Mammary epithelial cell (primary cell): ENCODE measurements at regions of chr4 and their contacts with region 1.

Region 1: GRCh38 chr4:21790438-21791029 is 158.0 kb downstream of the KCNIP4 start:
- DNase-seq: peak; percentile 30
- H3K4me3 ChIP-seq: no peak overlapping the region
- H3K27ac ChIP-seq: no peak overlapping the region
- H3K4me1 ChIP-seq: peaks cover 5% of the 10 kb centered on the region
- H3K27me3 ChIP-seq: peaks cover 2% of the 10 kb centered on the region
- CTCF ChIP-seq: peak; percentile 11 to 45

Region 2: DNA sequence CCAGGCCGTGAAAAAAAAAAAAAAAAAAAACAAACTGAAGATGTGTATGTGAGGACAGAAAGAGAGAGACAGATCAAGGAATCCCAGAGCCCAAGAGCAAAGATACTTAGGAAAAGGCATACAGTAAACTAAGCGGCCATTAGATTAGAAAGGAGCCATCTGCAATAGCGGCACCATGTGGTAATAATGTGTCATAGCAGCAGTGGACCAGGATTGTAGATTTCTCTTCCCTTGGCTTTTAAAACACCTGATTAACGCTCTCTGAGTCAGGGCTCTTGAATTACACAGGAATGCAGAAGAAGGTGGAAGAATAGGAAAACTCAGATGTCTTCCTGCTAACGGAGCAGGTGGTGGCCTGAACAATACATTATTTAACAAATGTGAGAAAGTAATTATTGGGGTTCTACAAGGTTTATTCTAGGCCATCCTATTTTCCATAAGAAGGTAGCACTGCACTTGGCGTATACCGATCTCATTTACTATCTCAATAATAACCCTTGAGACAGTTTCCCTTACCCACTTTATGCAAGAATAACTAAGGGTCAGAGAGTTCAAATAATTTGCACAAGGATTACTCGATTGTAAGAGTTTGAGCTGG is 24.6 kb before region 1 on chr4:
- CTCF ChIA-PET with region 1: no interaction called
- dilution Hi-C with region 1: no loop called
- in situ Hi-C with region 1: no loop called
- intact Hi-C with region 1: no loop called
- DNase-seq: peak; percentile 73
- H3K4me3 ChIP-seq: no peak overlapping the region
- H3K27ac ChIP-seq: no peak overlapping the region
- H3K4me1 ChIP-seq: peaks cover 13% of the 10 kb centered on the region
- H3K27me3 ChIP-seq: no peaks in the 10 kb centered on the region
- CTCF ChIP-seq: peak; percentile 85 to 98

Region 3: DNA sequence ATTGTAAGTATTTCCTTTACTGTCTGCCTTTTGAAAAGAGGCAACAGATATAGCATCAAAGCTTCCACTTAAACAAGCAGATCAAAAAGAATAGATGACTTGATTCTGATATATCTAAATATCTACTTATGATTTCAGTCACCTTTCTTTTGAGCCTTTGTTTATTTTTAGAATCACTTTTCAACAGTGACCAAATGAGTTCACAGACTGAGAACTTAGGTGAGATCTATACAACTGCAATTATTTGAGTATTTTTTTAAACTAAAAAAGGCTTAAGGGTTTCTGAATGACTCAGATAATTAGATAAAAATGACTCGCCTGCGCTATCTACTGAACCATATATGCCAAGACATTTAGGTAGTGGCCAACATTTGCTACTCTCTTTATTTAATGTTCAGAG is 324.7 kb after region 1 on chr4:
- CTCF ChIA-PET with region 1: no interaction called
- dilution Hi-C with region 1: no loop called
- in situ Hi-C with region 1: no loop called
- intact Hi-C with region 1: loop called (anchors 5 kb)
- DNase-seq: no peak
- H3K4me3 ChIP-seq: no peak overlapping the region
- H3K27ac ChIP-seq: no peak overlapping the region
- H3K4me1 ChIP-seq: no peaks in the 10 kb centered on the region
- H3K27me3 ChIP-seq: peaks cover 1% of the 10 kb centered on the region
- CTCF ChIP-seq: peak in 1 of 2 donors; percentile 40

Region 4: DNA sequence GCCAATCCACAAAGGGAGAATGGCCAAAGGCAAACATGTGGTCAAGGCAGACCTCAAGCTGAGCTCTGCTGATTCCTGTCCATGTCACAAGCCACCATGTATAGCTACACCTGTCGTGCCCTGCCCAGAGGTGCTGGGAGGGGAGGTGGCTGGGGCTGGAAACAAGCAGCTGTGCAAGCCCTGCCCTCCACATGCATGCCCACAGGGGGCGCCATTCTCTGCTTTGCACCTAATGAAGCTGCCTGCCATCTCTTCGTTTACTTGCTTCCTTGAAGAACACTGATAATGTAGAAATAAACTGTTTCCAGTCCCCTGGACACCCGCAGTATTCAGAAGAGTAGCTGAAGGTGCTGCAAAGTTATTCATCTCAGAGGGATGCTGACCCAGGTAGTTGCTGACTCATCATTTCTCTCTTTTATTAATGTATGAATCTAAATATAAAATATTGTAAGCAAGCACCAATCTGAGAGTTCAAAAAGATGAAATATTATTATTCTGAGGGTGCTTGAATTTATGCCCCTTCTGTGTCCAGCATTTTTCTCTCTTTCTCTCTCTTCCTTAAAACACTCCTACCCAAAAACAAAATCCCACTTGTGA is 446.7 kb after region 1 on chr4:
- CTCF ChIA-PET with region 1: no interaction called
- dilution Hi-C with region 1: no loop called
- in situ Hi-C with region 1: no loop called
- intact Hi-C with region 1: loop called (anchors 1 kb)
- DNase-seq: no peak
- H3K4me3 ChIP-seq: no peak overlapping the region
- H3K27ac ChIP-seq: no peak overlapping the region
- H3K4me1 ChIP-seq: no peaks in the 10 kb centered on the region
- H3K27me3 ChIP-seq: peaks cover 3% of the 10 kb centered on the region
- CTCF ChIP-seq: peak; percentile 60 to 67

Region 5: GRCh38 chr4:22389240-22389870 is 598.8 kb after region 1 on chr4:
- CTCF ChIA-PET with region 1: interaction called, 9 read pairs
- dilution Hi-C with region 1: no loop called
- in situ Hi-C with region 1: loop called (anchors 10 kb)
- intact Hi-C with region 1: loop called (anchors 1 kb)
- DNase-seq: peak; percentile 53
- H3K4me3 ChIP-seq: no peak overlapping the region
- H3K27ac ChIP-seq: no peak overlapping the region
- H3K4me1 ChIP-seq: peaks cover 20% of the 10 kb centered on the region
- H3K27me3 ChIP-seq: no peaks in the 10 kb centered on the region
- CTCF ChIP-seq: peak; percentile 84 to 93

Region 6: GRCh38 chr4:22625311-22625710 is 834.8 kb after region 1 on chr4:
- CTCF ChIA-PET with region 1: no interaction called
- dilution Hi-C with region 1: no loop called
- in situ Hi-C with region 1: no loop called
- intact Hi-C with region 1: no loop called
- DNase-seq: no peak
- H3K4me3 ChIP-seq: no peak overlapping the region
- H3K27ac ChIP-seq: no peak overlapping the region
- H3K4me1 ChIP-seq: no peaks in the 10 kb centered on the region
- H3K27me3 ChIP-seq: no peaks in the 10 kb centered on the region
- CTCF ChIP-seq: no peak

Region 7: DNA sequence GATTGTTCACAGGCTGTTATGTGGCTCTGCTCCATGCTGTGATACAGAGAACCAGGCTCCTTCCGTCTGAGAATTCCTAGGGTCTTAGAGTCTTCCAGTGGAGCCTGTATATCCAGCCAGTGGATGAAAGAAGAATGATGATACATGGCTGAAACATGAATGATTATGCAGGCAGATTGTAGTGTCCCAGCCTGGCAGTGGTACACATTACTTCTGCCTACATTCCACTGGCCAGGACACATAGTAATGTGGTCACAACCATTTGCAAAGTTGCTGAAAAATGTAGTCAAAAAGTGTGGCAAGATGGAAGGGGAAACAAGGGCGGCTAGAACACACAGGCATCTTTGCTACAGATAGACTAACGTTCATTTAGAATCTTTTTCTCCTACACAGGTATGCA is 897.7 kb after region 1 on chr4:
- CTCF ChIA-PET with region 1: no interaction called
- dilution Hi-C with region 1: no loop called
- in situ Hi-C with region 1: loop called in 1 of 2 experiments (anchors 10 kb)
- intact Hi-C with region 1: loop called (anchors 2 kb)
- DNase-seq: peak; percentile 43
- H3K4me3 ChIP-seq: no peak overlapping the region
- H3K27ac ChIP-seq: no peak overlapping the region
- H3K4me1 ChIP-seq: peaks cover 5% of the 10 kb centered on the region
- H3K27me3 ChIP-seq: no peaks in the 10 kb centered on the region
- CTCF ChIP-seq: no peak